Activated CD4-positive, alpha-beta T cell treated with anti-CD3 and anti-CD28 coated beads for 36 hours (primary cell): ENCODE measurements at regions of chr4 and their contacts with region 1.

Region 1: GRCh38 chr4:55853484-55854046 is at the start of gene EXOC1:
- DNase-seq: peak; percentile 99
- ATAC-seq: peak; percentile 98
- H3K4me3 Mint-ChIP-seq: no peak within 1 kb of the TSS
- H3K27ac Mint-ChIP-seq: peak within 1 kb of the TSS; percentile 83
- H3K4me1 Mint-ChIP-seq: peaks cover 35% of the 10 kb centered on the region
- H3K27me3 Mint-ChIP-seq: no peaks in the 10 kb centered on the region
- total RNA-seq, gene EXOC1: 19.1 to 21.4 TPM

Region 2: GRCh38 chr4:54064295-54065111 is 1789.1 kb before region 1 on chr4 and contains the start of gene CHIC2:
- CTCF ChIA-PET with region 1: no interaction called
- POLR2A ChIA-PET with region 1: no interaction called
- intact Hi-C with region 1: loop called in 1 of 2 experiments (anchors 10 kb)
- DNase-seq: peak; percentile 98
- ATAC-seq: peak; percentile 84
- H3K4me3 Mint-ChIP-seq: peak within 1 kb of the TSS; percentile 94
- H3K27ac Mint-ChIP-seq: peak within 1 kb of the TSS; percentile 94
- H3K4me1 Mint-ChIP-seq: peaks cover 41% of the 10 kb centered on the region
- H3K27me3 Mint-ChIP-seq: no peaks in the 10 kb centered on the region
- total RNA-seq, gene CHIC2: 14.7 to 17.7 TPM

Region 3: GRCh38 chr4:55345980-55346850 is 507.4 kb before region 1 on chr4 and contains the start of gene SRD5A3:
- CTCF ChIA-PET with region 1: no interaction called
- POLR2A ChIA-PET with region 1: no interaction called
- intact Hi-C with region 1: loop called in 1 of 2 experiments (anchors 1 kb)
- DNase-seq: peak; percentile 89
- ATAC-seq: peak; percentile 89
- H3K4me3 Mint-ChIP-seq: peak within 1 kb of the TSS; percentile 82
- H3K27ac Mint-ChIP-seq: peak within 1 kb of the TSS; percentile 90
- H3K4me1 Mint-ChIP-seq: peaks cover 25% of the 10 kb centered on the region
- H3K27me3 Mint-ChIP-seq: no peaks in the 10 kb centered on the region
- total RNA-seq, gene SRD5A3: 20.5 to 24.6 TPM

Region 4: DNA sequence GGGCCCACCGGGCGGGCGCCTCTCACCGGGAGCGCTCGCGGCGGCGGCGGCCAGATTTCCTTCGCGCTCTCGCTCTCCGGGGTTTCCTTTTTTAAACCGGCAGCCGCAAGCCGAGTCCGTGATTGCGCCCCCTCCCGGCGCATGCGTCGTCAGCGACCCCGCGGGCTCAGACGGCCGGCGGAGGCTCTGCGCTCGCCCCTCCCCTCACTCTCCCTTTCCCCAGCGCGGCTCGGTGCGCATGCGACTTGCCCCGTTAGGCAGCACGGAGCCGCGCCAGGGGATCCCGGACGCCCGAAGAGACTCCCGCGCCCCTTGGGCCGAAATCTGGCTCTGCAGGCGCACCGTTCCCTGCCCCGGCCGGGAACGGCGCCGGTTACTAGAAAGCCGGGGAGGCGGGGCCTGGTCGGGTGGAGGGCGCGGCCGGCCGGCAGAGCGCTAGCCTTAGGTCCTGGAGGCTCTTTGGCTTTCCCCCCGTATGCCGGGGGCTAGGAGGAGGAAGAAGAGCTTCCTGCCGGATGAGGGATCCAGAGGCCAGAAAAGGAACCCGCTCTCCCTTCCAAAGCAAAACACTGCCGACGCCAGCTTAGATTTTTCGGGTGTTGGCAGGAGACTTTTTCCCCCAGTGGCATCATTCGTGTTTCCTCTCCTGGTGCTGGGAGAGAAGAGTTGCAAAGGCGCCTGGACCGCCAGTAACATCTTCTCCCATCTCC is 306.7 kb before region 1 on chr4 and contains the start of gene CLOCK:
- CTCF ChIA-PET with region 1: no interaction called
- POLR2A ChIA-PET with region 1: no interaction called
- intact Hi-C with region 1: loop called (anchors 1 to 5 kb)
- DNase-seq: peak; percentile 90
- ATAC-seq: peak; percentile 77
- H3K4me3 Mint-ChIP-seq: peak within 1 kb of the TSS; percentile 90
- H3K27ac Mint-ChIP-seq: peak within 1 kb of the TSS; percentile 86
- H3K4me1 Mint-ChIP-seq: peaks cover 46% of the 10 kb centered on the region
- H3K27me3 Mint-ChIP-seq: peaks cover 7% of the 10 kb centered on the region
- total RNA-seq, gene CLOCK: 10.4 to 13.3 TPM

Region 5: DNA sequence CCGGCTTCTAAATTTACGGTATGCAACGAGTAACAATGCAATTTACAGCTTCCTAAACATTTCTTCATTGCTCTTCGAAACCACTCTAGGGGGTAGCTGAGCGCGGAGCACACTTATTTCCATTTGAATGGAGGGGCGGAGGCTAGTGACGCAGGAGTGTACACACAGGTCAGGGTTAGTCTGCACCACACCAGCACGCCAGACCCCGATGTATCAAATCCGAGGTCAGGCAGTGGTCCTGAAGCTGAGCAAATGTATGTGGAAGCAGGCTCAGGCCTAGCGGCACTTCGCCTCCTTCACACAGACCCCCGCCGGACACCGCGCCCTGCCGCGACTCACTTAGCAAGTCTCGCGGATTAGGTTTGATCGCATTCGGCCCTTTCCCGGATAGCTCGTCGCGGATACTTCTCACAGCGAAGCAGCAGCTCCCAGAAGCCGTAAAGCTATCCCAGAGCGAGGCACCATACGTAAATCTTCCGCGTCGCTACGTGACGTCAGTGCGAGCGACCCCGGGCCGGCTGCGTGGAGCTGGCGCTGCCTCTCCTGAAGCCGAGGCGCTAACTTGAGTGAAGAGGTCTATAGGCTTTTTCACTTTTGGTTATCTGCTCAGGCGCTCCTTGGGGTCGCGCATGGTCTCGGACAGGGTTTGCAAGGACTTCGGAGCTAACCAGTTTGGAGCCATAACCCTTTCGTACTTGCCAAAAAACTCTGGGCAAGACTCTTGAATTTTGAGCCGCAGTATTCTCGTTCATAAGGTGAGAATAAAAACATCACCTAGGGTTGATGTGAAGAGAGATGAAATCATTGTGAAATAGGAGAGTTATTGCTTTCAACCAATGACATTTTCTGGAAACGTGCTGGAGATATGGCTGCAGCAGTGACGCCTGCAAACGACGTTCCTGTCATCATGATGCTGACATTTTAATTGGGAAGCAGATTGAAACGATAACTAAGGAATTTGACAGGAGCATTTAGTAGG is 533.7 kb after region 1 on chr4 and contains the start of gene AASDH:
- CTCF ChIA-PET with region 1: no interaction called
- POLR2A ChIA-PET with region 1: no interaction called
- intact Hi-C with region 1: loop called in 1 of 2 experiments (anchors 1 kb)
- DNase-seq: peak; percentile 97
- ATAC-seq: peak; percentile 94
- H3K4me3 Mint-ChIP-seq: peak within 1 kb of the TSS; percentile 98
- H3K27ac Mint-ChIP-seq: peak within 1 kb of the TSS; percentile 100
- H3K4me1 Mint-ChIP-seq: peaks cover 31% of the 10 kb centered on the region
- H3K27me3 Mint-ChIP-seq: no peaks in the 10 kb centered on the region
- total RNA-seq, gene AASDH: 13.3 to 16.4 TPM

Region 6: GRCh38 chr4:56977321-56978012 is 1123.9 kb after region 1 on chr4 and contains the start of gene NOA1:
- CTCF ChIA-PET with region 1: no interaction called
- POLR2A ChIA-PET with region 1: no interaction called
- intact Hi-C with region 1: loop called (anchors 2 to 5 kb)
- DNase-seq: peak; percentile 98
- ATAC-seq: peak; percentile 84
- H3K4me3 Mint-ChIP-seq: peak within 1 kb of the TSS; percentile 88
- H3K27ac Mint-ChIP-seq: peak within 1 kb of the TSS; percentile 97
- H3K4me1 Mint-ChIP-seq: peaks cover 51% of the 10 kb centered on the region
- H3K27me3 Mint-ChIP-seq: no peaks in the 10 kb centered on the region
- total RNA-seq, gene NOA1: 24.9 to 31.5 TPM